MCF 10A (cell line): ENCODE measurements at regions of chr9 and their contacts with region 1.

Region 1: DNA sequence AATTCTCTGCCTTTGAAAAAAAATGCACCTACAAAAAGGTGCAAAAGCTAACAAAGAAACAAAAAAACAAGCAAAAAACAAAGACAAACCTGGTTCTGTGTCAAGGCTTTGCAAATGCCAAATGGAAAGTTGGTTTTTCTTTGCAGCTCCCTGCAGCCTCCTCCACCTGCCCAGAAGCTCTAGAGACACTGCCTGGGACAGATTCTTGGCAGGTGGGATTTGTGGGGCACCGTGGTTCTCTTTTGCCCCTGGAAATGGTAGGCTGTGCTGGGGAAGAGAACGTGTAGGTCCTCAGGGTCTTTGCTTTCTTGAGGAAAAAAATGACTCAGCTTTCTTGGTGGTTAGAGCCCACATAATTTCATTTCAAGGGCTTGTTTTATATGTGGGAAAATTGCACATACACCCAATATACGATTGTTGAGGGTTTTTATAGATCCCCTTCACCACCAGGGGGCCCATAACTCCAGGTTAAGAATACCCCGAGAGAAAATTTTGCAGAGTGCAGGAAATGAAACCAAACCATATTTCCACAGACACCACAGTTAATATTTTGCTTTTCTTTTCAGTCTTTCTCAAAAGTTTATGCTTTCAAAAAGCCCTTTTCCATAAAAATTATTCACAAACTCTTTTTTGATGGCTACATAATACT is 58.7 kb downstream of the NXNL2 start:
- DNase-seq: peak; percentile 73
- H3K4me3 Mint-ChIP-seq: no peak overlapping the region
- H3K27ac Mint-ChIP-seq: no peak overlapping the region
- H3K4me1 Mint-ChIP-seq: no peaks in the 10 kb centered on the region
- H3K27me3 Mint-ChIP-seq: no peaks in the 10 kb centered on the region
- CTCF ChIP-seq: peak; percentile 65

Region 2: GRCh38 chr9:87950765-87951488 is 642.7 kb before region 1 on chr9:
- CTCF ChIA-PET with region 1: interaction called, 4 read pairs
- POLR2A ChIA-PET with region 1: no interaction called
- intact Hi-C with region 1: loop called (anchors 5 kb)
- DNase-seq: peak; percentile 56
- H3K4me3 Mint-ChIP-seq: no peak overlapping the region
- H3K27ac Mint-ChIP-seq: no peak overlapping the region
- H3K4me1 Mint-ChIP-seq: no peaks in the 10 kb centered on the region
- H3K27me3 Mint-ChIP-seq: no peaks in the 10 kb centered on the region
- CTCF ChIP-seq: peak; percentile 75

Region 3: GRCh38 chr9:88537761-88538091 is 55.9 kb before region 1 on chr9:
- CTCF ChIA-PET with region 1: no interaction called
- POLR2A ChIA-PET with region 1: no interaction called
- intact Hi-C with region 1: no loop called
- DNase-seq: peak; percentile 60
- H3K4me3 Mint-ChIP-seq: no peak overlapping the region
- H3K27ac Mint-ChIP-seq: no peak overlapping the region
- H3K4me1 Mint-ChIP-seq: peaks cover 13% of the 10 kb centered on the region
- H3K27me3 Mint-ChIP-seq: no peaks in the 10 kb centered on the region
- CTCF ChIP-seq: no peak

Region 4: DNA sequence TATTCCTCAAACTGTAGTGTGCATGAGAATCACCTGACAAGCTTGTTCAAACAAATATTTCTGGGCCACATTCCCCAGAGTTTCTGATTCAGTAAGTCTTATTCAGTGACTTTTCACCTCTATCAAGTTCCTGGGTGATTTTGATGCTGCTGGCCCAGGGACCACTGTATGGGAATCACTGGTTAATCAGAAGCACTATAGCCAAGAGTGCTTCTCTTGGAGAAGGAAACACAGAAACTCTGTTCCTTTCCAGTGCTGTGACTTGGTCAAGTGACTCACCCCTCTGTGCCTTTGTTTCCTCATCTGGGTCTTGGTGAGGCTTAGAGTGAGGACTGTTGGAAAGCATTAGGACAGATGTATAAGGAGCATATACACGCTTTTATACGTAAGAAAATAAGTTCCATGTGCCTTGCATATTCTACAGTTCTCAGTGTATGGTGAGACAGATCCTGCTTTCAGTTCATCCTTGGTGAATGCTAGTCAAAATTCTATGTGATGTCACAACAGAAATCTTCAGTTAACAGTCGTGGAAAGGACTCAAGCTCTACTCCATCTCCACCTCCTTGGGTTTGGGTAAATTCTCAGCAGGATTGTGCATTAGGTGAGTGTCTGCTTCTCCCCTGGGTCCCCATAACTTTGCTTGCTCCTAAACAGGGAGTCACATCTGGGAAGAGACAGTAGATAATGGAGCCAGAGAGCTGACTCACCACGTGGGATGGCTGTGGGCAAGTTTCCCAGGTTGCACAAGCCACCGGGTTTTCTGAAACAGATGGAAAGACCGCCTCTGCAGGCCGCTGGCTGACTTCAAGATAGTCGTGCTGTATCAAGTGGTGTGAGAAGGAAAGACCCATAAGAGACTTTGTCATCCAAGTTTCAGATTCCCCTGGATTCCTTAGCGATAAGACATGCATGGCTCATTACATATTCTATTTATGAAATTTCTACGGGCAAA is 58.3 kb after region 1 on chr9:
- CTCF ChIA-PET with region 1: interaction called, 6 read pairs
- POLR2A ChIA-PET with region 1: interaction called, 3 read pairs
- intact Hi-C with region 1: loop called (anchors 5 kb)
- DNase-seq: peak; percentile 96
- H3K4me3 Mint-ChIP-seq: peak overlapping the region; percentile 32
- H3K27ac Mint-ChIP-seq: peak overlapping the region; percentile 67
- H3K4me1 Mint-ChIP-seq: peaks cover 9% of the 10 kb centered on the region
- H3K27me3 Mint-ChIP-seq: no peaks in the 10 kb centered on the region
- CTCF ChIP-seq: peak; percentile 16

Region 5: DNA sequence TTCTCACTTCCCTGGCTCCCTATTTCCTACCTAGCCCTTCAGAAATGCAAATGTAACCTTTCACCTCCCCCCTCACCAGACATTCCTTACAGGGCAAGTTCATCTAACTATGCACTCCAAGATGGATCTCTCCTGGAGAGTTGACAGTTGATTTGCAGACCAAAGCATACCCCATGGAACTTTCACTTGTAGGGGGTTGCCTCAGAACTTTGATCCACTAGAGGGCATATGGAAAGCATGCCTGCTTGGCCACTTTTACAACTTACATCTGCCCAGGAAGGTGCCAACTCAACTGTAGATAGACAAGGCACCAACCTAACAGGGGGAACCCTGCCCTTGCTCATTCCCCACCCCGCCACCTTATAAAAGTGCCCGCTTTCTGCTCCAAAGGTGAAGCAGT is 129.1 kb after region 1 on chr9:
- CTCF ChIA-PET with region 1: no interaction called
- POLR2A ChIA-PET with region 1: no interaction called
- intact Hi-C with region 1: loop called (anchors 5 kb)
- DNase-seq: peak; percentile 55
- H3K4me3 Mint-ChIP-seq: no peak overlapping the region
- H3K27ac Mint-ChIP-seq: no peak overlapping the region
- H3K4me1 Mint-ChIP-seq: peaks cover 7% of the 10 kb centered on the region
- H3K27me3 Mint-ChIP-seq: no peaks in the 10 kb centered on the region
- CTCF ChIP-seq: peak; percentile 47